Activated B cell treated with CpG ODN at 0.5 μM for 24 hours (primary cell): ENCODE measurements at regions of chr11 and their contacts with region 1.

Region 1: GRCh38 chr11:15208378-15209222 is 93.9 kb downstream of the INSC start:
- DNase-seq: peak; percentile 66
- ATAC-seq: peak; percentile 97
- H3K4me3 Mint-ChIP-seq: no peak overlapping the region
- H3K27ac Mint-ChIP-seq: no peak overlapping the region
- H3K4me1 Mint-ChIP-seq: no peaks in the 10 kb centered on the region
- H3K27me3 Mint-ChIP-seq: peaks cover 12% of the 10 kb centered on the region
- CTCF ChIP-seq: peak; percentile 67

Region 2: DNA sequence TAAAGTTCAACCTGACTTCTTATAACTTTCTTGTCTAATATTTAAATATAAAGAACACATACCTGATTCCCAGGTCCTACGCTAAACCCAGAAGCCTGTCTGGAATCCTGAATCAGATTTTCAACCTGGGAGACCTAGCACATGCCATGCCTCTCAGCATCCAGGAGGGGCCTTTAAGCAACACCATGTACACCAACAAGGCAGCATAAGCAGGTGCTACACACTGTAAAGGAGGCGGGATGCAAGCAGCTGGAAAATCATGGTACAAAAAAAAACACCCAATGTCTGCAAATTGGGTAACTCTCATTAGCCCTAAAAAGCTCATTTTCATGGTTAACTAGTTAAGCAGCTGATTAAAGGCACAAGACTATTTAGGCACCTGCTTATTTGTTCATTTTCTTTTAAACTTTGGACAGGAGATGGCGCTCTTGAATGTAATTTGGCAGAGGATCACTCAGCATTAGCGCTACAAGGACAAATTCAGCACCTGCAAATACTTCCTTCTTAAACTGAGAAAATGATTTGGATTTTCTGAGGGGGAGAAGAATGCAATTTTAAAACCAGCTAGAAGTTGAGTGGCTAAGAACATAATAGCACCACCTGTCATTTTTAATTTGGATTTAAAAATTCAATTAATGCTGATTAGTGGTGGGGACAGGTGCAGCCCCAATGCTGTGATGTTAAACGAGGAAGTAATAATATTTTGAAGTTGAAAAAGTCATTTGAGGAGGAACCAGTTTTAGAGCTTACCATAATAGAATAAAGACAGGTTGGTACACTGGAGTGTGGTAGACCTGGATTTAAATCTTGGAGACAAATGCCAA is 1436.2 kb before region 1 on chr11:
- CTCF ChIA-PET with region 1: no interaction called
- POLR2A ChIA-PET with region 1: no interaction called
- intact Hi-C with region 1: loop called (anchors 5 kb)
- DNase-seq: no peak
- ATAC-seq: peak; percentile 57
- H3K4me3 Mint-ChIP-seq: no peak overlapping the region
- H3K27ac Mint-ChIP-seq: no peak overlapping the region
- H3K4me1 Mint-ChIP-seq: peaks cover 6% of the 10 kb centered on the region
- H3K27me3 Mint-ChIP-seq: peaks cover 15% of the 10 kb centered on the region
- CTCF ChIP-seq: no peak

Region 3: GRCh38 chr11:14789879-14790484 is 418.6 kb before region 1 on chr11:
- CTCF ChIA-PET with region 1: interaction called, 9 read pairs
- POLR2A ChIA-PET with region 1: no interaction called
- intact Hi-C with region 1: loop called (anchors 1 kb)
- DNase-seq: no peak
- ATAC-seq: no peak
- H3K4me3 Mint-ChIP-seq: no peak overlapping the region
- H3K27ac Mint-ChIP-seq: no peak overlapping the region
- H3K4me1 Mint-ChIP-seq: no peaks in the 10 kb centered on the region
- H3K27me3 Mint-ChIP-seq: no peaks in the 10 kb centered on the region
- CTCF ChIP-seq: peak; percentile 33

Region 4: GRCh38 chr11:15006139-15006759 is 202.4 kb before region 1 on chr11:
- CTCF ChIA-PET with region 1: no interaction called
- POLR2A ChIA-PET with region 1: no interaction called
- intact Hi-C with region 1: loop called (anchors 1 kb)
- DNase-seq: no peak
- ATAC-seq: peak; percentile 42
- H3K4me3 Mint-ChIP-seq: no peak overlapping the region
- H3K27ac Mint-ChIP-seq: no peak overlapping the region
- H3K4me1 Mint-ChIP-seq: no peaks in the 10 kb centered on the region
- H3K27me3 Mint-ChIP-seq: peaks cover 32% of the 10 kb centered on the region
- CTCF ChIP-seq: no peak

Region 5: DNA sequence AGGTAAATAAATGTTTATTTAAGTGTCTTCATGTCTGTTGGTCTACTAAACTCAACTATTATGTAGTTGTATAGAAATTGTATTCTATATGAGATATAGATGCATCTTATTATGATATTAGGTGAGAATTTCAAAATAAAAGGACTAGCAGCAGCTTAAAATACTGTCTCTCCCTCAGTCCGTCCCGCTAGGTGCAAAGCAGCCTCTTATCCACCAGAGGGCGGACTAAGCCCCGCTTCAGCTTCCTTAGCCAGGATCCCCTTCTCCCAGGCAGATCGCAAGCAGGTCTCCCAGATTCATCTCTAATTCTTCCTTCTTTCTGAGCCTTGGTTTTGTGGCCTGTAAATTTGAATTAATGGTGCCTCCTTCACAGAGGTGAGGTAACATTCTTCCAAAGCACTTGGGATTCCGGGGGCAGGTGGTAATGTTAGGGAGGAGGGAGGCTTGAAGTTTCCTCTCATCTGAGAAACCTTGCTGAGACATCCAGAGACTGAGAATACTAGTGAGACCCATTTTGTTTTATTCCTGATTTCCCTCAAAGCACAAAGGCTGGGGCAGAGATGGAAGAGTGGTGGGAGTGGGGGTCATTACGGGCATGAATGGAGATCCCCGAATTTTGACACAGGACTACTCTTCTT is 107.4 kb before region 1 on chr11:
- CTCF ChIA-PET with region 1: interaction called, 126 read pairs
- POLR2A ChIA-PET with region 1: no interaction called
- intact Hi-C with region 1: loop called (anchors 1 kb)
- DNase-seq: no peak
- ATAC-seq: peak; percentile 84
- H3K4me3 Mint-ChIP-seq: no peak overlapping the region
- H3K27ac Mint-ChIP-seq: no peak overlapping the region
- H3K4me1 Mint-ChIP-seq: peaks cover 6% of the 10 kb centered on the region
- H3K27me3 Mint-ChIP-seq: peaks cover 20% of the 10 kb centered on the region
- CTCF ChIP-seq: peak; percentile 84